A673 (cell line): ENCODE measurements at regions of chr2 and their contacts with region 1.

Region 1: DNA sequence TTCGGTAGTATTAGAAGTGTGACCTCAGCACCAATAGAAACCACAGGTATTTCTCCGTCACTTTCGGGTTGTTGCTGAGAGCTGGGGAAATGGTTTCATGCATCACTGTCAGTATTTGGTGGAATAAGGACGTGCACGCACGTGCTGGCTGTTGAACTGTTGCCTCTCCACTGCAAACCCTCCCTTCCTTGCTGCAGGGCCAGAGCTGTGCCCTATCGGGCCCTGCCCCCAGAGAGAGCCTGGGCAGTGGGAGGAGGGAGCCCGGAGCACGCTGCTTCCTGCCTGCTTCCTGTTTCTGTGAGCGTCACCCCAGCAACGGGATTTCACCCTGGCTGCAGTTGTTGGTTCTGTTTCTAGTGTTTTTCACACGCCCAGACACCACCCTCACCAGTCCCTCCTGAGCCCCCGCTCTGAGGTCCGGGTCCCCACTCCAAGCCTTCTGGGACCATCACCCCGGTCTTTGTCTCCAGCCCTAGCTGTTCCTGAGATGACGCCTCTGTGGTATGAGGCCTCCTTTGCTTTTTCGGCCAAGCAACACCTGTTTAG is 47.4 kb downstream of the LRRFIP1 start:
- DNase-seq: peak; percentile 80
- H3K4me3 ChIP-seq: peak overlapping the region; percentile 13
- H3K27ac ChIP-seq: peak overlapping the region; percentile 83
- H3K4me1 ChIP-seq: peaks cover 39% of the 10 kb centered on the region
- H3K27me3 ChIP-seq: no peaks in the 10 kb centered on the region
- CTCF ChIP-seq: no peak

Region 2: GRCh38 chr2:237744613-237745249 is 69.9 kb after region 1 on chr2:
- CTCF ChIA-PET with region 1: interaction called, 41 read pairs
- POLR2A ChIA-PET with region 1: no interaction called
- intact Hi-C with region 1: loop called (anchors 1 kb)
- DNase-seq: peak; percentile 77
- H3K4me3 ChIP-seq: no peak overlapping the region
- H3K27ac ChIP-seq: no peak overlapping the region
- H3K4me1 ChIP-seq: peaks cover 3% of the 10 kb centered on the region
- H3K27me3 ChIP-seq: no peaks in the 10 kb centered on the region
- CTCF ChIP-seq: peak; percentile 99

Region 3: DNA sequence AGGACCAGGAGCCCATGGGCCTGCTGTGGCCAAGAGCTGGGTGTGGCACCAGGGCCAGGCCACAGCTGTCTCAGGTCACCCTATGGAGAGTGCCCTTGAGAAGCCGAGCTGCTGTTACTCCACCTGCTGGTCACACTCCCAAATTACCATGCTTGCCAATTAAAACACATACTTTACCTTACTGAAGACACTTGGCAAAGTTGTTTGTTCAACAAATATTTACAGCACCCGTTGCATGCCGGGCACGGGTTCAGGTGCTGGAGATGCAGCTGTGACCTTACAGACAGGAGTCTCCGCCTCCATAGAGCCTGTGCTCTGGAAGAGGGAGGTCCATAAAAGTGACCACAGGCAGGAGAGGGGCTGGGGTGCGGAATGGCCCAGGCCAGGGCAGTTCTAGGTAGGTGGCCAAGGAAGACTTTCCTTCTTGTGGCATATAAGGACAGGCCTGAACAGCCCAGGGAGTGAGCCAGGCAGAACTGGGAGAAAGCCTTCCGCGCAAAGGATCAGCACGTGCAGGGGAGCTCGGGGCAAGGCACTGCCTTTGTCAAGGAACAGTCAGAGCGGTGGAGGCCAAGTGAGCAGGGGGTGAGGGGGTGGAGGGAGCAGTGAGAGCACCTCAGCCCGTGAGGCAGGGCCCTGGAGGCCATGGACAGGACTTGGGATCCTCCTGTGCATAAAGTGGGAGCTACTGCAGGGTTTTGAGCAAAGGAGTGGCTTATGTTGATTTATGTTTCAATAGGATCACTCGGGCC is 100.2 kb after region 1 on chr2:
- CTCF ChIA-PET with region 1: interaction called, 11 read pairs
- POLR2A ChIA-PET with region 1: no interaction called
- intact Hi-C with region 1: no loop called
- DNase-seq: peak; percentile 54
- H3K4me3 ChIP-seq: no peak overlapping the region
- H3K27ac ChIP-seq: no peak overlapping the region
- H3K4me1 ChIP-seq: no peaks in the 10 kb centered on the region
- H3K27me3 ChIP-seq: no peaks in the 10 kb centered on the region
- CTCF ChIP-seq: peak; percentile 76

Region 4: GRCh38 chr2:237791977-237792727 is 117.3 kb after region 1 on chr2:
- CTCF ChIA-PET with region 1: no interaction called
- POLR2A ChIA-PET with region 1: no interaction called
- intact Hi-C with region 1: no loop called
- DNase-seq: peak; percentile 17
- H3K4me3 ChIP-seq: no peak overlapping the region
- H3K27ac ChIP-seq: no peak overlapping the region
- H3K4me1 ChIP-seq: no peaks in the 10 kb centered on the region
- H3K27me3 ChIP-seq: no peaks in the 10 kb centered on the region
- CTCF ChIP-seq: 0 out of 2 replicates have a peak, but pooled peaks have one; percentile 34

Region 5: GRCh38 chr2:237864940-237865622 is 190.3 kb after region 1 on chr2:
- CTCF ChIA-PET with region 1: no interaction called
- POLR2A ChIA-PET with region 1: no interaction called
- intact Hi-C with region 1: no loop called
- DNase-seq: no peak
- H3K4me3 ChIP-seq: no peak overlapping the region
- H3K27ac ChIP-seq: no peak overlapping the region
- H3K4me1 ChIP-seq: peaks cover 4% of the 10 kb centered on the region
- H3K27me3 ChIP-seq: no peaks in the 10 kb centered on the region
- CTCF ChIP-seq: no peak

Region 6: GRCh38 chr2:238263204-238264071 is 588.6 kb after region 1 on chr2:
- CTCF ChIA-PET with region 1: no interaction called
- POLR2A ChIA-PET with region 1: no interaction called
- intact Hi-C with region 1: loop called (anchors 2 kb)
- DNase-seq: peak; percentile 80
- H3K4me3 ChIP-seq: no peak overlapping the region
- H3K27ac ChIP-seq: no peak overlapping the region
- H3K4me1 ChIP-seq: no peaks in the 10 kb centered on the region
- H3K27me3 ChIP-seq: no peaks in the 10 kb centered on the region
- CTCF ChIP-seq: peak; percentile 89